SK-N-SH (cell line): ENCODE measurements at regions of chr20 and their contacts with region 1.

Region 1: GRCh38 chr20:63223221-63224207 is 7.6 kb upstream of the YTHDF1 start:
- DNase-seq: peak; percentile 76
- H3K4me3 ChIP-seq: no peak overlapping the region; a peak in 1 of 4 replicates
- H3K27ac ChIP-seq: no peak overlapping the region
- H3K4me1 ChIP-seq: peaks cover 0 to 17% of the 10 kb centered on the region in 2 experiments; a peak in 1 of 4 replicates
- H3K27me3 ChIP-seq: 0 out of 2 replicates have a peak, but pooled peaks cover 6% of the 10 kb centered on the region
- CTCF ChIP-seq: peak; percentile 81
- EP300 ChIP-seq: no peak
- RAD21 ChIP-seq: peak; percentile 70

Region 2: DNA sequence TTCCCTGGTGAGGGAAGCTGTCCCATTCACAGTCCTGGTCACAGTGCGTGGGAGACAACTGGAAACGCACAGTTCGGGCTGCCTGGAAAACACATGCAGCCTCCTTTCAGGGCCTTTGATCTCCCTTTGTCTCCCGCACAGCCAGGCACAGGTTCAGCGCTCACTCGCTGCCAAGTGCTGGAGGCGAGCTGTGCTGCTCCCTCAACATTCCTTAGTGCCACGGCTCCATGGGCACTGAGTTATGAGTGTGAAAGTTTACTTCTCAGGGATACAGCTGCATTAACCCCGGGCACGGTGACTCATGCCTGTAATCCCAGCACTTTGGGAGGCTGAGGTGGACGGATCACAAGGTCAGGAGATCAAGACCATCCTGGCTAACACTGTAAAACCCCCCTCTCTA is 16.6 kb before region 1 on chr20:
- CTCF ChIA-PET with region 1: interaction called, 52 read pairs
- POLR2A ChIA-PET with region 1: no interaction called
- DNase-seq: no peak
- H3K4me3 ChIP-seq: no peak overlapping the region
- H3K27ac ChIP-seq: no peak overlapping the region
- H3K4me1 ChIP-seq: no peaks in the 10 kb centered on the region
- H3K27me3 ChIP-seq: no peaks in the 10 kb centered on the region
- CTCF ChIP-seq: no peak
- EP300 ChIP-seq: no peak
- RAD21 ChIP-seq: no peak

Region 3: GRCh38 chr20:63261060-63261794 is 37.7 kb after region 1 on chr20:
- CTCF ChIA-PET with region 1: interaction called, 21 read pairs
- POLR2A ChIA-PET with region 1: no interaction called
- DNase-seq: no peak
- H3K4me3 ChIP-seq: no peak overlapping the region
- H3K27ac ChIP-seq: no peak overlapping the region
- H3K4me1 ChIP-seq: peaks cover 0 to 5% of the 10 kb centered on the region in 2 experiments; a peak in 1 of 4 replicates
- H3K27me3 ChIP-seq: peaks cover 15% of the 10 kb centered on the region
- CTCF ChIP-seq: no peak
- EP300 ChIP-seq: no peak
- RAD21 ChIP-seq: no peak

Region 4: DNA sequence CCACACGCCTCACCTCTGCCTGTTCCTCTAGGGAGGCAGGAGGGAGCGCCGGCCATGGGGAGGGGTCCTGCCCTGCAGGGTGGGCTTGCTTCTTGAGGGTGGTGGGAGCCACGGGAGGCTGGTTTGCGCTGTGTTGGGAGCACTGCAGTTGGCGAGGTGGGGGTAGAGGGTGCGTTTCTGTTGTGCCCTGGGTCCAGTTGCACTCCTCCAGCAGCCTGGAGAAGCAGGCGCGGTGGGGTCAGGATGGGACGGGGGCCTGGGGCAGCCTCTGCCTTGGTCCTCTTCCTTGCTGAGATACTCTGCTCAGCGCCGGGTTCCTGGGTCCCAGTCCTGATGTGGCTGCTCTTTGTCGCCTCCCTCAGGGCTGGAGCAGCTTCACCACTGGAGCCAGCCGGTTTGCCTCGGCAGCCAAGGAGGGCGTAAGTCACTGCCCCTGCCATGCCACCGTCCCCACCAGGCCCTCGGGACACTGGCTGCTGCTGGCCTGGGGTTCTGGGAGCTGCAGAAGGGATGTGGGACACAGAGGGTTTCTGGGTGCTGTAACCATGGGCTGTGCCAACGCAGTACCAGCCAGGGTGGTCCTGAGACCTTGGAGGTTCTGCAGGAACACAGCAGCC is 57.5 kb after region 1 on chr20:
- CTCF ChIA-PET with region 1: interaction called, 14 read pairs
- POLR2A ChIA-PET with region 1: no interaction called
- DNase-seq: peak; percentile 61
- H3K4me3 ChIP-seq: no peak overlapping the region; a peak in 1 of 4 replicates
- H3K27ac ChIP-seq: no peak overlapping the region
- H3K4me1 ChIP-seq: no peaks in the 10 kb centered on the region
- H3K27me3 ChIP-seq: no peaks in the 10 kb centered on the region
- CTCF ChIP-seq: peak; percentile 33
- EP300 ChIP-seq: no peak
- RAD21 ChIP-seq: no peak